Esophagus muscularis mucosa (tissue), 4 donors: ENCODE measurements at regions of chr6 and their contacts with region 1.

Region 1: DNA sequence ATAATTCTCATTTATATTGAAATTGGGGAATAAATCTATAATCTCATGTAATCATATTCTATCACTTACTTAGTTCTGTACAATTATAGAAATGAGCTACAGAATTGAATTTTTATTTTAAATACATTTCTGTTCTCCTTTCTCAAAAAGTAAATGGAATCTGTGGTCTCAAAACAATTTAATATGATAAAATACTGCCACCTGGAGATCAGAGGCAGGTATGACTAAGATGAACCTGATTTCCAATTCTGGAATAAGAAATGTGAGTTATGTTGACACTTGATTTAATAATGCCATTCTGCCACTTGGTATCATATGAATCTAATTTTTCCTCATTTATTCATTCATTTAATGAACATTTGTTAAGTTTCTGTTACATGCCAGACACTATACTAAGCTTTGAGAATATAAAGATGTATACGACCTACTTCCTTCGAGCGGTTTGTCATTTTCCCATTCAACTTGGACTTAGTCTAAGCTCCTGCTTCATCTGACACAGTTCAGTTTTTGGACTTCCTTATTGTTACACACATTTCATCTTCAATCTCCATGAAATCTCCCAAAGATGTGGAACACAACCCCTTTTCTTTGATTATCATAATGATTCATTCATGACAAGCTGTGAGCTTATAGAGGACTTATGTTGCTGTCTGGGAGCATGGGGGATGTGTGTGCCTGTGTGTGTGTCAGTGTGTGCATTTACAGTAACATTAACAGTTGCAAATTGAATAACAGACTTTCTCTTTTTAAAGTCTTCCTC is 7.5 kb upstream of the CCDC28A start:
- DNase-seq: no peak
- H3K4me3 ChIP-seq: no peak overlapping the region
- H3K27ac ChIP-seq: no peak overlapping the region
- H3K4me1 ChIP-seq: no peaks in the 10 kb centered on the region
- H3K27me3 ChIP-seq: no peaks in the 10 kb centered on the region
- CTCF ChIP-seq: peak; percentile 74 to 76 (median 74)
- EP300 ChIP-seq: no peak
- POLR2A ChIP-seq: no peak

Region 2: DNA sequence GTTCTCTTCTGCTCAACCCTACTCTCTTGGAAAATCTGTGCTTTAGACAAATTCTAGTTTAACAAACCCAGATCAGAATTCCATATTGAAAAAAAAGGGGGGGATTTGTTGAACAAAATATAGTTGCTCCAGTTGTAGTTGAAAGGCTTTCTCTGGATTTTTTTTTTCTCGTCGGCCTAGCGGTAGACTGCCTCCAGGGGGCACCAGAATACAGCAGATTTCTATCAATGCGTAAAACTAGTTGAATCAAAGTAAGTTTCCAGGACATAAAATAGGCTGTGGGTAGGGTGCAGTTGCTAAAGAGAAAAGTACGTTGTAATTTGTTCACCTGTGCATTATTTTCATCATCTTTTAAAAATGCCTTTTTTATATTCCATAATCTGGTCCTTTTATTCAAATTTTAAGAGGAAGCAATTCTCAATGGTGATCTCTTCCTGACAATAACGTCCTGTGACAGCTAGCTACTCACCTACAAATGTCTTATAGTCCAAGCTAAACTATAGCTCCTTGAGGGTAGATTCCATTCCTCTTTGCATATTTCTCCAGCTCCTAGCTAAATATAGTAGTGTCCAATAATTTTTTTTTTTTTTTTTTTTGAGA is 764.2 kb before region 1 on chr6:
- intact Hi-C with region 1: loop called (anchors 10 kb)
- DNase-seq: no peak
- H3K4me3 ChIP-seq: no peak overlapping the region
- H3K27ac ChIP-seq: no peak overlapping the region
- H3K4me1 ChIP-seq: peaks cover 0 to 1% (median 0%) of the 10 kb centered on the region in 4 donors
- H3K27me3 ChIP-seq: no peaks in the 10 kb centered on the region
- CTCF ChIP-seq: peak; percentile 86 to 89 (median 87)
- EP300 ChIP-seq: no peak
- POLR2A ChIP-seq: no peak

Region 3: GRCh38 chr6:138428944-138429598 is 337.0 kb before region 1 on chr6:
- intact Hi-C with region 1: loop called (anchors 5 kb)
- DNase-seq: no peak
- H3K4me3 ChIP-seq: peak overlapping the region; percentile 8 to 40 (median 32)
- H3K27ac ChIP-seq: peak overlapping the region; percentile 41 to 50 (median 44)
- H3K4me1 ChIP-seq: peaks cover 14 to 27% (median 22%) of the 10 kb centered on the region in 4 donors
- H3K27me3 ChIP-seq: no peaks in the 10 kb centered on the region
- CTCF ChIP-seq: peak; percentile 60 to 77 (median 63)
- EP300 ChIP-seq: no peak
- POLR2A ChIP-seq: no peak

Region 4: DNA sequence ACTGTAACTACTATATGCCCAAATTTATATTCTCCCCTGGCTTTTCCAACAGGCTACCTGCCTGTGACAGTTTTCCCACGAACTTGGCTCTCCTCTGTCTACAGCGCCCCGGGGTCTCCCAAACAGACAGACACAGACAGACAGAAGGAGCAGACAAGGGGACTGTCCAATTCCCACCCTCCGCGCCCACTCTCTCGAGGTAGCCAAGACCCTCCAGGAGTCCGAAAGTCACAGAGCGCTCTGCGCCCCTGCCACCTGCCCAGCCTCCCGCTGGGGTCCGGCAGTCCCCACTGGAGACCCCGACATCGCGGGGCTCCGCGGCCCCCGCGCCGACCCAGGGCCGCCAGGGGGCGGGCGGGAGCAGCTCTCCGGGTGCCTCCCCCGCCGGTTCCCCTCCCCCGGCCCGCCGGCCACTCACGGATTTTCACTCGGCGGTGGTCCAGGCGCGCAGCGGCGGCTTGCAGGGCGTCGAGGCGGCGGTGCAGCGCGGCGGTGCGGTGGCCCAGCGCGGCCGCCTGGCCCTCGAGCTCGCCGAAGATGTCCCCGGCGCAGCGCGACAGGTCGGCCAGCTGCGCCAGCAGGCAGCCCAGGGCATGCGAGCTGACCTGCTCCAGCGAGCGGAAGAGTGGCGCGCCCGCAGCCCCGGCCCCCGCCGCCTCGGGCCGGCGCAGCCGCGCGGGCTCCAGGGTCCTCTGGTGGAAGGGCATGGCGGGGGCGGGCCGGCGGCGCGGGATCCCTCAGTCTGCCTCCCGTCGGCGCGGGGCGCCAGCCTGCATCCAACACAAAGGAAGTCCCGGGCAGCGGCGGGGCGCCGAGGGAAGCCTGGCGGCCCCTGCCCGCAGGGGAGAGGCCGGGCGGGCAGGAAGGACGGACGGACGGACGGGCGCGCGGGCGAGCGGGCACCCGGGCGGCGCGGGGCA is 73.8 kb before region 1 on chr6:
- intact Hi-C with region 1: loop called (anchors 1 kb)
- DNase-seq: peak; percentile 93
- H3K4me3 ChIP-seq: peak overlapping the region; percentile 82 to 92 (median 88)
- H3K27ac ChIP-seq: peak overlapping the region; percentile 74 to 84 (median 76)
- H3K4me1 ChIP-seq: peaks cover 0 to 17% (median 14%) of the 10 kb centered on the region in 4 donors
- H3K27me3 ChIP-seq: no peaks in the 10 kb centered on the region
- CTCF ChIP-seq: peak; percentile 78 to 92 (median 87)
- EP300 ChIP-seq: no peak
- POLR2A ChIP-seq: no peak